ENCODE measurements at regions of chr4 and their contacts with region 1.

Region 1: GRCh38 chr4:38034986-38035882 is 75.0 kb downstream of the PTTG2 start:
- DNase-seq: peak in 4 of 9 experiments; percentile 22 to 74 (median 60)
- ATAC-seq: peak; percentile 65
- H3K4me3 ChIP-seq: no peak overlapping the region
- H3K4me3 Mint-ChIP-seq: no peak overlapping the region
- H3K27ac ChIP-seq: no peak overlapping the region
- H3K27ac Mint-ChIP-seq: no peak overlapping the region
- H3K4me1 ChIP-seq: no peaks in the 10 kb centered on the region
- H3K4me1 Mint-ChIP-seq: no peaks in the 10 kb centered on the region
- H3K27me3 ChIP-seq: no peaks in the 10 kb centered on the region
- H3K27me3 Mint-ChIP-seq: no peaks in the 10 kb centered on the region
- CTCF ChIP-seq: peak; percentile 89

Region 2: DNA sequence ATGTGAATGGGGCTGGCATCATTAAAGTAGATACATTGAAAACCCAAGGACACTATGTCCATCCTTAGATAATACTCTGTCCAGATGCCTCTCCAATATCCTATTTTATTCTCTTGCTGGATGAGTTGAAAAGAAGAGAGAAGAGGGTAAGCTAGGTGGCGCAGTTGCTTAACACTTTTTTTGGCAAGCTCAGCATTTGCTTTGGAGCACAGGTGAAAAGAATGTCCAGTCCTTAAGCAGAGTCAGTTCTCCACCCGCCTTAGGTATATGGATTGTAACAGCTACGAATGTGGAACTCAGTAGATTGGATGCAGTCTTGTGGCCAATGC is 582.3 kb before region 1 on chr4:
- CTCF ChIA-PET with region 1: no interaction called
- POLR2A ChIA-PET with region 1: no interaction called
- intact Hi-C with region 1: loop called in 1 of 2 experiments (anchors 1 kb)
- DNase-seq: peak in 5 of 9 experiments; percentile 2 to 64 (median 28)
- ATAC-seq: peak; percentile 48
- H3K4me3 ChIP-seq: peak overlapping the region; percentile 38 to 49
- H3K4me3 Mint-ChIP-seq: peak overlapping the region; percentile 82
- H3K27ac ChIP-seq: no peak overlapping the region
- H3K27ac Mint-ChIP-seq: no peak overlapping the region
- H3K4me1 ChIP-seq: peaks cover 6% of the 10 kb centered on the region
- H3K4me1 Mint-ChIP-seq: peaks cover 16% of the 10 kb centered on the region
- H3K27me3 ChIP-seq: no peaks in the 10 kb centered on the region
- H3K27me3 Mint-ChIP-seq: peaks cover 44% of the 10 kb centered on the region
- CTCF ChIP-seq: peak; percentile 32

Region 3: GRCh38 chr4:37793562-37793961 is 241.7 kb before region 1 on chr4:
- CTCF ChIA-PET with region 1: interaction called, 49 read pairs
- POLR2A ChIA-PET with region 1: interaction called, 4 read pairs
- intact Hi-C with region 1: no loop called
- DNase-seq: peak in 4 of 9 experiments; percentile 18 to 61 (median 34)
- ATAC-seq: peak; percentile 66
- H3K4me3 ChIP-seq: no peak overlapping the region
- H3K4me3 Mint-ChIP-seq: no peak overlapping the region
- H3K27ac ChIP-seq: no peak overlapping the region
- H3K27ac Mint-ChIP-seq: no peak overlapping the region
- H3K4me1 ChIP-seq: no peaks in the 10 kb centered on the region
- H3K4me1 Mint-ChIP-seq: no peaks in the 10 kb centered on the region
- H3K27me3 ChIP-seq: no peaks in the 10 kb centered on the region
- H3K27me3 Mint-ChIP-seq: no peaks in the 10 kb centered on the region
- CTCF ChIP-seq: peak; percentile 65

Region 4: GRCh38 chr4:37802068-37802666 is 233.1 kb before region 1 on chr4:
- CTCF ChIA-PET with region 1: interaction called, 79 read pairs
- POLR2A ChIA-PET with region 1: interaction called, 5 read pairs
- intact Hi-C with region 1: loop called (anchors 1 kb)
- DNase-seq: no peak
- ATAC-seq: no peak
- H3K4me3 ChIP-seq: no peak overlapping the region
- H3K4me3 Mint-ChIP-seq: no peak overlapping the region
- H3K27ac ChIP-seq: no peak overlapping the region
- H3K27ac Mint-ChIP-seq: no peak overlapping the region
- H3K4me1 ChIP-seq: no peaks in the 10 kb centered on the region
- H3K4me1 Mint-ChIP-seq: peaks cover 2% of the 10 kb centered on the region
- H3K27me3 ChIP-seq: no peaks in the 10 kb centered on the region
- H3K27me3 Mint-ChIP-seq: no peaks in the 10 kb centered on the region
- CTCF ChIP-seq: no peak

Region 5: GRCh38 chr4:38046728-38047489 is 11.7 kb after region 1 on chr4:
- CTCF ChIA-PET with region 1: interaction called, 10 read pairs
- POLR2A ChIA-PET with region 1: no interaction called
- intact Hi-C with region 1: no loop called
- DNase-seq: no peak
- ATAC-seq: no peak
- H3K4me3 ChIP-seq: no peak overlapping the region
- H3K4me3 Mint-ChIP-seq: no peak overlapping the region
- H3K27ac ChIP-seq: no peak overlapping the region
- H3K27ac Mint-ChIP-seq: no peak overlapping the region
- H3K4me1 ChIP-seq: no peaks in the 10 kb centered on the region
- H3K4me1 Mint-ChIP-seq: no peaks in the 10 kb centered on the region
- H3K27me3 ChIP-seq: no peaks in the 10 kb centered on the region
- H3K27me3 Mint-ChIP-seq: no peaks in the 10 kb centered on the region
- CTCF ChIP-seq: no peak

Measured in CD8-positive, alpha-beta T cell (primary cell).